HCT116 (cell line): ENCODE measurements at regions of chr14 and their contacts with region 1.

Region 1: GRCh38 chr14:34912178-34912577 is 37.0 kb upstream of the BAZ1A start:
- DNase-seq: no peak
- ATAC-seq: peak; percentile 49; the same call in 1 of the 2 replicates
- H3K4me3 ChIP-seq: no peak overlapping the region
- H3K27ac ChIP-seq: no peak overlapping the region
- H3K4me1 ChIP-seq: no peaks in the 10 kb centered on the region
- H3K27me3 ChIP-seq: no peaks in the 10 kb centered on the region
- CTCF ChIP-seq: 0 out of 6 replicates have a peak, but pooled peaks of 1 of the 3 experiments have one; percentile 27
- POLR2A ChIP-seq: no peak
- RAD21 ChIP-seq: peak; percentile 49; the same call in 1 of the 2 replicates

Region 2: GRCh38 chr14:34365309-34365915 is 546.8 kb before region 1 on chr14:
- CTCF ChIA-PET with region 1: no interaction called
- POLR2A ChIA-PET with region 1: no interaction called
- RAD21 ChIA-PET with region 1: no interaction called
- intact Hi-C with region 1: no loop called
- DNase-seq: no peak
- ATAC-seq: peak; percentile 62
- H3K4me3 ChIP-seq: no peak overlapping the region
- H3K27ac ChIP-seq: no peak overlapping the region
- H3K4me1 ChIP-seq: no peaks in the 10 kb centered on the region
- H3K27me3 ChIP-seq: no peaks in the 10 kb centered on the region
- CTCF ChIP-seq: peak in 2 of 3 experiments; percentile 1 to 24; a peak in 1 of 6 replicates
- POLR2A ChIP-seq: no peak
- RAD21 ChIP-seq: peak; percentile 38

Region 3: DNA sequence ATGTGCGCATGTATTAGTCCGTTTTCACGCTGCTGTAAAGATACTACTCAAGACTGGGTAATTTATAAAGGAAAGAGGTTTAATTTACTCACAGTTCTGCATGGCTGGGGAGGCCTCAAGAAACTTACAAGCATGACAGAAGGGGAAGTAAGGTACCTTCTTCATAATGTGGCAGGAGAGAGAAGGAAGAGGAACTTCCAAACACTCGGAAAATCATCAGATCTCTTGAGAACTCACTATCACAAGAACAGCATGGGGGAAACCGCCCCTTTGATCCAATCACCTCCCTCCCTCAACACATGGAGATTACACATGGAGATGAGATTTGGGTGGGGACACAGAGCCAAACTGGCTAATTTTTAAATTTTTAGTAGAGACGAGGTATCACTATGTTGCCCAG is 240.5 kb before region 1 on chr14:
- CTCF ChIA-PET with region 1: interaction called, 4 read pairs
- POLR2A ChIA-PET with region 1: no interaction called
- RAD21 ChIA-PET with region 1: no interaction called
- intact Hi-C with region 1: loop called (anchors 5 kb)
- DNase-seq: no peak
- ATAC-seq: no peak
- H3K4me3 ChIP-seq: no peak overlapping the region
- H3K27ac ChIP-seq: no peak overlapping the region
- H3K4me1 ChIP-seq: no peaks in the 10 kb centered on the region
- H3K27me3 ChIP-seq: no peaks in the 10 kb centered on the region
- CTCF ChIP-seq: no peak
- POLR2A ChIP-seq: no peak
- RAD21 ChIP-seq: no peak

Region 4: GRCh38 chr14:35341446-35342159 is 429.4 kb after region 1 on chr14:
- CTCF ChIA-PET with region 1: no interaction called
- POLR2A ChIA-PET with region 1: no interaction called
- RAD21 ChIA-PET with region 1: no interaction called
- intact Hi-C with region 1: no loop called
- DNase-seq: peak; percentile 45
- ATAC-seq: peak; percentile 99
- H3K4me3 ChIP-seq: no peak overlapping the region
- H3K27ac ChIP-seq: peak overlapping the region; percentile 50; the same call in 1 of the 2 replicates
- H3K4me1 ChIP-seq: peaks cover 33 to 35% of the 10 kb centered on the region in 2 experiments; a peak in 3 of 4 replicates
- H3K27me3 ChIP-seq: no peaks in the 10 kb centered on the region
- CTCF ChIP-seq: no peak
- POLR2A ChIP-seq: no peak
- RAD21 ChIP-seq: no peak